CD4-positive, alpha-beta memory T cell (primary cell): ENCODE measurements at regions of chr9 and their contacts with region 1.

Region 1: DNA sequence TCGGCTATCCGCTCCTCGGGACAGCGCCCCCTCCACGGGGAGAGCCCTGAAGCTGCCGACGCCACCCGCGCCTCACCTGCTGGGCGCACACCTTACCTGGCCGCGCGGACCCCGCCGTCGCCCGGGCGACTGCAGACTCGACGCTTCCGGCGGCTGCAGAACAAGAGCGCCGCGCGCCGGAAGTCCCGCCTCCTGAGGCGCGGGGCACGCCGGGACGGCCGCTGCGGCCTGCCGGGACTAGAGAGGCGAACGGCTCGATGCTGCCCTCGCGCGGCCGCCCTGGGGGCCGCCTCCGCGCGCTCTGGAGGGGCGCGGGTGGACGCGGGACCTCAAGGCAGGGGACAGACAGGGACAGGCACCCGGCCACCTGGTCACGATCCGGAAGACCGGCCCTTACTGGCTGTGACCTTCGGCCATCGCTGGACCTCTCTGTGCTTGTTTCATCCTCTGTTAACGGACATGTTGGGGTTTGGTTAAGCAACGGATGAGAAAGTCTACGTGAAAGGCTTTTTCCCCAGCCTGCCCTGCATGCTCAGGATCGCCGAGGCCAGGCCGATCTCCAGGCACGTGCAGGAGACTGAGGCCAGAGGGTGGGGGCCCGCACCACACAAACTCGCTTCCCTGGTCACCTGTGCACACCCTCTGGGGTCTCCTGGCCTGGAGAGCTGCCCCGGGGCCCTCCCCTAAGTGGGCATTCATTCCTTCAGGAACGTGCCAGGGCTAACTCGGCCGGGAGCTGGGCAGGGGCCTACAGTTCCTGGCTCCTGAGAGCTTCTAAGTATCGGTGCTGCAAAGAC is at the start of gene SNAPC4:
- DNase-seq: peak; percentile 80 to 87 (median 85)
- H3K4me3 ChIP-seq: peak within 1 kb of the TSS; percentile 36 to 57
- H3K4me3 Mint-ChIP-seq: peak within 1 kb of the TSS; percentile 83 to 90 (median 88)
- H3K27ac ChIP-seq: peak within 1 kb of the TSS; percentile 55
- H3K27ac Mint-ChIP-seq: peak within 1 kb of the TSS; percentile 30 to 93 (median 79)
- H3K4me1 ChIP-seq: peaks cover 51% of the 10 kb centered on the region
- H3K4me1 Mint-ChIP-seq: peaks cover 28 to 50% (median 40%) of the 10 kb centered on the region in 4 donors
- H3K27me3 ChIP-seq: no peaks in the 10 kb centered on the region
- H3K27me3 Mint-ChIP-seq: no peaks in the 10 kb centered on the region
- total RNA-seq, gene SNAPC4: 13.1 to 15.4 TPM

Region 2: DNA sequence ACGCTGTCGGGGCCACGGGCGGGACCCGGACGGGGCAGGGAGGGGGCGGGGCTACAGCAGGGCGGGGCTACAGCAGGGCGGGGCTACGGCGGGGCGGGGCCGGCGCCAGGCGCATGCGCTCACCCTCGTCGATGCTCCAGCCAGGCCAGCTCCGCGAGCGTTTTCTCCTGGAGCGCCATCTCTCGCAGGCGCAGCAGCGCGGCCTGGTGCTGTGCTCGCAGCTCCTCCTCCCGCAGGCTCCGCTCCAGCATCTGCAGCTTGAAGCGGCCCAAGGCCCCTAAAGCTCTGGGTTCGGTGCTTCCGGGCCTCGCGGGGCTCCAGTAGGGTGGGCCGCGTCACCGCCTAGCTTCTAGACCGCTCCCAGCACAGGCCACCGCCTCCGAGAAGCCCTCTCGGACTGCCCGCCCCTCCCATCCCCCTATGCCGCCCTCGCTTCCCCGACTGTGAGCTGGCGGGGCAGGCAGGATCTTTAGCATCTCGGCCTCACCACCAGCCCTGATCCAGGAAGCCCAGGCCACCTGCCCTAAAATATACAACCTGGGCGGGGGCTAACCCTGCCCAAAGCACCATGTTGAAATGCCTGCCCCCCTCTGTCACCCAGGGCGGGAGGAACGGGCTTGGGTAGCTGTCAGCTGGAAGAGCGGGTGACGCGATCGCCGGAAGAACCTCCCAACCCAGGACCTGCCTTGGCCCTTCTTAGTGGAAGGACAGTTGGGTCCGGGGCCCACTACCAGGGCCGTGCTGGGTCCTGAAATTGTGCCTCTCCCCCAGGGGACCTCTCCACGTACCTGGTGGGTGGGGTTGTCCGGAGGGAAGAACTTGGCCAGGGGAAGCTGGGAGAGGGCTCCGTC is 132.8 kb before region 1 on chr9:
- CTCF ChIA-PET with region 1: no interaction called
- POLR2A ChIA-PET with region 1: no interaction called
- intact Hi-C with region 1: loop called (anchors 5 kb)
- DNase-seq: peak; percentile 81 to 86 (median 83)
- H3K4me3 ChIP-seq: peak overlapping the region; percentile 47 to 70
- H3K4me3 Mint-ChIP-seq: peak overlapping the region; percentile 67 to 90 (median 84)
- H3K27ac ChIP-seq: peak overlapping the region; percentile 49
- H3K27ac Mint-ChIP-seq: peak overlapping the region; percentile 35 to 92 (median 81)
- H3K4me1 ChIP-seq: peaks cover 7% of the 10 kb centered on the region
- H3K4me1 Mint-ChIP-seq: peaks cover 2 to 12% (median 4%) of the 10 kb centered on the region in 4 donors
- H3K27me3 ChIP-seq: no peaks in the 10 kb centered on the region
- H3K27me3 Mint-ChIP-seq: peaks cover 0 to 6% of the 10 kb centered on the region in 2 donors

Region 3: DNA sequence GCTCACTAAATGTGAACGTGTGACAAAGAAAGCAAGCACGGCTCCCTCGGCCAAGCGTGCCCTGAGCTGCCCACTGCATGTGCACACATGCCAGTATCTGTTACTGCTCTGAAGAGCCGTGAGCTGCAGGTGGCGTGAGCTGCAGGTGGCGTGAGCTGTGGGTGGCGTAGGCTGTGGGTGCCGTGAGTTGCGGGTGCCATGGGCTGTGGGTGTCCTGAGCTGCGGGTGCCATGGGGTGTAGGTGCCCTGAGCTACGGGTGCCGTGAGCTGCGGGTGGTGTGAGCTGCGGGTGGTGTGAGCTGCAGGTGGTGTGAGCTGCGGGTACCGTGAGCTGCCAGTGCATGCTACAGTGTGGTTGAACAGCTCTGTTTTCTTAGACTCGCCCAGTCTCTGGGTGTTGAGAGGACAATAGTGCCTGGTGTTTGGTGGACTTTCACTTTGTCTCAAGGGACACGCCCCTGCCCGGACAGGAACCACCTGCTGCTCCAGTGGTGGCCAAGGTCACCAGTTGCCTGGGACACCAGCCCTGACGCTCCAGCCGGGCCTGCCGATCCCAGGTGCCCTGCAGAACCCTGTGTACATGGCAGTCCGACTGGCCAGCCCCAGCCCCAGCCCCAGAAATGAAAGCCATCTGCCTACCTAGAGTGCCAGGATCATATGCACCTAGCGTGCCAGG is 103.1 kb before region 1 on chr9:
- CTCF ChIA-PET with region 1: no interaction called
- POLR2A ChIA-PET with region 1: no interaction called
- intact Hi-C with region 1: no loop called
- DNase-seq: no peak
- H3K4me3 ChIP-seq: no peak overlapping the region
- H3K4me3 Mint-ChIP-seq: no peak overlapping the region
- H3K27ac ChIP-seq: no peak overlapping the region
- H3K27ac Mint-ChIP-seq: no peak overlapping the region
- H3K4me1 ChIP-seq: no peaks in the 10 kb centered on the region
- H3K4me1 Mint-ChIP-seq: no peaks in the 10 kb centered on the region
- H3K27me3 ChIP-seq: no peaks in the 10 kb centered on the region
- H3K27me3 Mint-ChIP-seq: peaks cover 0 to 2% of the 10 kb centered on the region in 2 donors

Region 4: GRCh38 chr9:136372561-136373299 is 27.5 kb before region 1 on chr9:
- CTCF ChIA-PET with region 1: no interaction called
- POLR2A ChIA-PET with region 1: no interaction called
- intact Hi-C with region 1: no loop called
- DNase-seq: no peak
- H3K4me3 ChIP-seq: no peak overlapping the region
- H3K4me3 Mint-ChIP-seq: no peak overlapping the region
- H3K27ac ChIP-seq: no peak overlapping the region
- H3K27ac Mint-ChIP-seq: peak overlapping the region in 1 of 7 donors; percentile 37
- H3K4me1 ChIP-seq: no peaks in the 10 kb centered on the region
- H3K4me1 Mint-ChIP-seq: no peaks in the 10 kb centered on the region
- H3K27me3 ChIP-seq: no peaks in the 10 kb centered on the region
- H3K27me3 Mint-ChIP-seq: no peaks in the 10 kb centered on the region

Region 5: GRCh38 chr9:136410500-136411287 is 10.5 kb after region 1 on chr9 and contains the starts of genes ENTR1 and PMPCA:
- CTCF ChIA-PET with region 1: interaction called, 20 read pairs
- POLR2A ChIA-PET with region 1: interaction called, 36 read pairs
- intact Hi-C with region 1: loop called (anchors 1 kb)
- DNase-seq: peak; percentile 93 to 94 (median 93)
- H3K4me3 ChIP-seq: peak within 1 kb of the TSS; percentile 71 to 85
- H3K4me3 Mint-ChIP-seq: peak within 1 kb of the TSS; percentile 87 to 92 (median 90)
- H3K27ac ChIP-seq: peak within 1 kb of the TSS; percentile 93
- H3K27ac Mint-ChIP-seq: peak within 1 kb of the TSS; percentile 81 to 96 (median 94)
- H3K4me1 ChIP-seq: peaks cover 35% of the 10 kb centered on the region
- H3K4me1 Mint-ChIP-seq: peaks cover 23 to 59% (median 40%) of the 10 kb centered on the region in 4 donors
- H3K27me3 ChIP-seq: no peaks in the 10 kb centered on the region
- H3K27me3 Mint-ChIP-seq: no peaks in the 10 kb centered on the region
- total RNA-seq, gene ENTR1: 82.9 to 85.9 TPM
- total RNA-seq, gene PMPCA: 71.8 to 73.3 TPM

Region 6: DNA sequence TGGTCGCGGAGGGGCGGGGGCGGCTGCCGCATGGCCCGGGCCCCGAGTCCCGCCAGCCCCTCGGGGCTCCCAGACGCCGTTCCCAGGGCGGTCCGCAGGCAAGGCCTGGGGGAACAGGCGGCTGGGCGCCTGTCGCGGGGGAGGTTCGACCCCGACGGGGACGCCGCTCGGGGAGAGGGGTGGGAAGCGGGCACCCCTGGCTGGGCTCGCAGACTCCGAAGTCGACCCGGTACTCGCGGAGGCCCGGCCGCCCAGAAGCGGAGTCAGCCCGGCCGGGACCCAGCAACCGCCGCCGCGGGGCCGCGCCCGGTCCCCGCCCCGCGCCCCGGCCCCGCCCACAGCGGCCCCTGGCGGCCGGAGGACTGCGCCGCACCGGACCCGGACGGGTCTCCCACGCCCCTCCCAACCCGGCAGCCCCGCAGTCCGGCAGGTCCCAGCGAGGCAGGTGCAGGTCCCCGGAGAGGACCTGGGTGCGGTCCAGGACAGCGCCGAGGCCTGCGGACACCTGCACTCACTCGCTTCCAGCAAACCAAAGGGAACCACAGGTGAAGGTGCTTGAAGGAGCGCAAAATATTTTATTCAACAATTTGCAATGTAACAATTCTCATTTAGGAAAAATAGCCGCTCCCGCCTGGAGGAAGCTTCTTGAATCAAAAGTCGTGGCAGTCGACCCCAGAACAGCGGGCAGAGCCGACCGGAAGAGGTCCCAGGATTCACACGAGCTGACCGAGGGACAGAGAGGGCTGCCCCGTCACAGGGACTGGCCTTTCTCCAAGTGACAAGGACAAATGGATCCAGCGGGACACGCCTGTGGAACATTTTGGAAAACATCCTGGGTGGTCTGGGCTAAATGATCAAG is 39.5 kb after region 1 on chr9 and contains the start of gene INPP5E:
- CTCF ChIA-PET with region 1: interaction called, 5 read pairs
- POLR2A ChIA-PET with region 1: interaction called, 3 read pairs
- intact Hi-C with region 1: loop called (anchors 1 kb)
- DNase-seq: peak; percentile 69 to 89 (median 83)
- H3K4me3 ChIP-seq: peak within 1 kb of the TSS in 1 of 2 donors; percentile 66
- H3K4me3 Mint-ChIP-seq: peak within 1 kb of the TSS; percentile 86 to 91 (median 88)
- H3K27ac ChIP-seq: peak within 1 kb of the TSS; percentile 74
- H3K27ac Mint-ChIP-seq: peak within 1 kb of the TSS in 6 of 7 donors; percentile 66 to 95 (median 91)
- H3K4me1 ChIP-seq: peaks cover 29% of the 10 kb centered on the region
- H3K4me1 Mint-ChIP-seq: peaks cover 16 to 36% (median 25%) of the 10 kb centered on the region in 4 donors
- H3K27me3 ChIP-seq: no peaks in the 10 kb centered on the region
- H3K27me3 Mint-ChIP-seq: no peaks in the 10 kb centered on the region
- total RNA-seq, gene INPP5E: 29.1 to 31.2 TPM

Region 7: DNA sequence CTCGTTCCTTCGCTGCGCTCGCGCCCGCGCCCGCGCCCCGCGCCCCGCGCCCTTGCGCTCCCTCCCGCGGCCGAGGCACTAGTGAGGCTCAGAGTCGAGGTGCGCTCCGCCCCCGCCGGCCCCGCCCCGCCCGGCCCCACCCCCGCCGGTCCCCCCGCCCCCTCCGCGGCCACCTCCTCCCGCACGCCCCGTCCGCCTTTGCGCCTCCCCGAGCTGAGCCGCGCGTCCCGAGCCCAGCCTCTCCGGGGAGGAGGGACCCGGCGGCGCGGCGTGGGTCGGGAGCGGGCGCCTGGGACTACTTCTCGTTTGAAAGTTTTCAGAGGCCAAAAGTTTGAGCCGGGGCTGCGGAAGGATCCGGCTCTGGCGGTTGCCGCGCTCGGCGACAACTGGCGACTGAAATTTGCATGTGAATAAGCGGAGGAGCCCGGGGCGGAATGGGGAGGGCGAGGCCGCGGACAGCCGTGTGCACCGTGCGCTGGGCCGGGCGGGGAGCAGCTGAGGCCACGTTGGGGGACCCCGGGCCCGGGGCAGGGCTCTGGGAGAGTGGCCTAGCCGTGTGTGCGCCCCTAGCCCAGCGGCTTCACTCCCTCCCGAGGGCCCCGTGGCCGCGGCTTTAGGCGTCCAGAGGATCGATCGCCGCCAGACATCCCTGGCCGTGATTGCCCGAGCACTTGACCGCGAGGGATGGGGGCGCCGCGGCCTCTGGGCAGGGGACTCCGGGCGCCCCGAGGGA is 145.9 kb after region 1 on chr9 and contains the start of gene NOTCH1:
- CTCF ChIA-PET with region 1: no interaction called
- POLR2A ChIA-PET with region 1: no interaction called
- intact Hi-C with region 1: loop called (anchors 10 kb)
- DNase-seq: peak; percentile 84 to 87 (median 85)
- H3K4me3 ChIP-seq: peak within 1 kb of the TSS; percentile 38 to 77
- H3K4me3 Mint-ChIP-seq: peak within 1 kb of the TSS; percentile 85 to 90 (median 88)
- H3K27ac ChIP-seq: peak within 1 kb of the TSS; percentile 60
- H3K27ac Mint-ChIP-seq: peak within 1 kb of the TSS; percentile 64 to 94 (median 86)
- H3K4me1 ChIP-seq: peaks cover 38% of the 10 kb centered on the region
- H3K4me1 Mint-ChIP-seq: peaks cover 5 to 32% (median 21%) of the 10 kb centered on the region in 4 donors
- H3K27me3 ChIP-seq: no peaks in the 10 kb centered on the region
- H3K27me3 Mint-ChIP-seq: no peaks in the 10 kb centered on the region
- total RNA-seq, gene NOTCH1: 43.0 to 45.4 TPM

Region 8: DNA sequence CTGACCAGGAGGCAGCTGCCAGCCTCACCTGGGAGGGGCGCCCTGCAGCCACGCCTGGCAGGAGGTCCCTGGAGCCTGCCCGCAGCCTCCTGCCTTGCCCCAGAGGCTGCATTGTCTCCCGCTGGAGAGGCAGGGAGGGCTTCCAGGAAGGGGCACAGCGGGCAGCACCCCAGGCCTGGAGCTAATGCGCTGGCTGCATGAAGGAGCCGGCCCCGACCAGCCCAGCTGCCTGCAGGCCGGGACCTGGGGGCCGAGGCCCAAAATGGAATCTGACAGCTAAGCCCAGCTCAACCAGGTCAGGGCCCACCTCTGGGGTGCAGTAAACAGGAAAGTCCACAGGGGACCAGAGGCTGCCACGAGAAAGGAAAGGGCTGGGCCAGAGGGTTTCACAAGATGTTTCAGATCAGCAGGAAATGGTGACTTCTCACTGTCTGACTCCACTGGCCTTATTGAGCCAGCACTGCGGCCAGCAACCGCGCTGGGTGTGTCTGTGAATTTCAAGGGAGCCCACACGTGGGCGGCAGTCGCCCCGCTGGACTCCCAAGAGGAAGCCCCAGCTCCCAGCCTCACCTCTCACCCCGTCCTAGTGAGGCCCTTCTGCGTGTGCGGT is 164.2 kb after region 1 on chr9:
- CTCF ChIA-PET with region 1: no interaction called
- POLR2A ChIA-PET with region 1: no interaction called
- intact Hi-C with region 1: no loop called
- DNase-seq: no peak
- H3K4me3 ChIP-seq: no peak overlapping the region
- H3K4me3 Mint-ChIP-seq: no peak overlapping the region
- H3K27ac ChIP-seq: no peak overlapping the region
- H3K27ac Mint-ChIP-seq: no peak overlapping the region
- H3K4me1 ChIP-seq: no peaks in the 10 kb centered on the region
- H3K4me1 Mint-ChIP-seq: peaks cover 0 to 1% (median 0%) of the 10 kb centered on the region in 4 donors
- H3K27me3 ChIP-seq: no peaks in the 10 kb centered on the region
- H3K27me3 Mint-ChIP-seq: no peaks in the 10 kb centered on the region